Astrocyte of the cerebellum (primary cell): ENCODE measurements at regions of chr5 and their contacts with region 1.

Region 1: GRCh38 chr5:113190347-113190746 is 213.7 kb downstream of the DCP2 start:
- DNase-seq: no peak
- H3K4me3 ChIP-seq: no peak overlapping the region
- CTCF ChIP-seq: no peak

Region 2: GRCh38 chr5:113123618-113124017 is 66.7 kb before region 1 on chr5:
- in situ Hi-C with region 1: loop called (anchors 5 kb)
- DNase-seq: no peak
- H3K4me3 ChIP-seq: no peak overlapping the region
- CTCF ChIP-seq: peak; percentile 34

Region 3: GRCh38 chr5:113140837-113141661 is 49.3 kb before region 1 on chr5:
- in situ Hi-C with region 1: no loop called
- DNase-seq: peak; percentile 60
- H3K4me3 ChIP-seq: no peak overlapping the region
- CTCF ChIP-seq: no peak

Region 4: DNA sequence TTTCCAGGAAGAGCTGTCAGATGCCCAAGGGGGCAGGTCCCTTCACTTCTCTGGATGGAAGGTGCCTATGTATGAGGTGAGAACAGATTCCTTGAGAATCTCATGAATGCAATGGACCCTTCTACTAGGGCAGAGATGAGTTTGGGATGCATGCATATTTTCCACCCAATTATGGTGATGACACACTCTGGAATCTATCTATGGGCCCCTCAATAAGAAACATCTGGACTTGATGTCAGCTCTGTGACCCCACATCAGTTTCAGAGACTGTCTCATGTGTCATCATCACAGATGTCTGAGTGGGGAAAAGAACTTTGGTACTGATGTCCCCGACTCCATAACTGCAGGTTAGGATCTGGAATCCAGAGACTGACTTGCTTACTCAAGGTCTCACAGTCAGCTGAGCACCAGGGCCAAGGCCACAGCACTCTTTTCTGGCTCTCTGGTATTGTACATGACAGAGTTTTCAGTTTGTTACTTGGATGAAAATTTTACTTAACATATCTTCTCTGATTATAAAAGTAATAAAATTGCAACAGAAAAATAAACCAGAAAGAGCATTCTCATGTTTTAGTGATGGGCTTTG is 36.7 kb before region 1 on chr5:
- in situ Hi-C with region 1: no loop called
- DNase-seq: no peak
- H3K4me3 ChIP-seq: no peak overlapping the region
- CTCF ChIP-seq: no peak

Region 5: DNA sequence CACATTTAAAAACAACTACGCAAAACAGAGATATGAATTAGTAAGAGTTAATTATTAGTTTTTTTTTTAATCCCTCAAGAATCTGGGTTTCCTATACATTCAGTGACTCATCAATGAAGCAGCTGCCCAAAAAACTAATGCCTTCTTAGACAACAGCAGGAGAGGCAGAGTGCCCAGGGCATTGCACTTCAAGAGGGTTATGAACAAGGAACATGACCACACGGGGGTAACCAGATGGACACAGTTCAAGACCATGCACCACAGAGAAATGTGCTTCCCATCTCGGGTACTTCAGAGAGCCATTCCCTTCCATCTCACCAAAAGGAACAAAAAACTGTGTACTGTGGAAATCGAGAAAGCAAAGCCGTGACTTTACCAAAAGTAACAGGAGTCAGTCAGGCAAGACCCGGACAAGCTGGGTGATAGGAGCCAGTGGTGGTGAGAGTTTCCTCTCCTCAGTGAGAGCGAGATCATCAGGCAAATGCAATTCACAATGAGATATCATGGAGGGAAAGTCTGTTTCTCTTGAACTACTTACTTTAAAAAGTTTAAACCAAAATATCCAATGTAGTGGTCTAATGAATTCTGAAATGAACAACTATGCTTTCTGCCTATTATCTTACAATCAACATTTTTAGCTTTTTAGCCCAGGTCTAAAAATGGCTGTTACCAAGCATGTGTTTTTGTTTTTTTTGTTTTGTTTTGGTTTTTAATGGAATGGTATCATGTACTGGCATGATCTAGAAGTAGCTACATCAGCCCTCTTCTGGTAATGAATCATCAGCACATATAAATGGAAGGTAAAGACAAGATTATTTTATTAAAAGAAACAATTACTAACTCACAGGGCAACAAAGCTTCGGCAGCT is 52.4 kb after region 1 on chr5:
- in situ Hi-C with region 1: no loop called
- DNase-seq: no peak
- H3K4me3 ChIP-seq: no peak overlapping the region
- CTCF ChIP-seq: no peak